ENCODE measurements at regions of chr15 and their contacts with region 1.

Region 1: DNA sequence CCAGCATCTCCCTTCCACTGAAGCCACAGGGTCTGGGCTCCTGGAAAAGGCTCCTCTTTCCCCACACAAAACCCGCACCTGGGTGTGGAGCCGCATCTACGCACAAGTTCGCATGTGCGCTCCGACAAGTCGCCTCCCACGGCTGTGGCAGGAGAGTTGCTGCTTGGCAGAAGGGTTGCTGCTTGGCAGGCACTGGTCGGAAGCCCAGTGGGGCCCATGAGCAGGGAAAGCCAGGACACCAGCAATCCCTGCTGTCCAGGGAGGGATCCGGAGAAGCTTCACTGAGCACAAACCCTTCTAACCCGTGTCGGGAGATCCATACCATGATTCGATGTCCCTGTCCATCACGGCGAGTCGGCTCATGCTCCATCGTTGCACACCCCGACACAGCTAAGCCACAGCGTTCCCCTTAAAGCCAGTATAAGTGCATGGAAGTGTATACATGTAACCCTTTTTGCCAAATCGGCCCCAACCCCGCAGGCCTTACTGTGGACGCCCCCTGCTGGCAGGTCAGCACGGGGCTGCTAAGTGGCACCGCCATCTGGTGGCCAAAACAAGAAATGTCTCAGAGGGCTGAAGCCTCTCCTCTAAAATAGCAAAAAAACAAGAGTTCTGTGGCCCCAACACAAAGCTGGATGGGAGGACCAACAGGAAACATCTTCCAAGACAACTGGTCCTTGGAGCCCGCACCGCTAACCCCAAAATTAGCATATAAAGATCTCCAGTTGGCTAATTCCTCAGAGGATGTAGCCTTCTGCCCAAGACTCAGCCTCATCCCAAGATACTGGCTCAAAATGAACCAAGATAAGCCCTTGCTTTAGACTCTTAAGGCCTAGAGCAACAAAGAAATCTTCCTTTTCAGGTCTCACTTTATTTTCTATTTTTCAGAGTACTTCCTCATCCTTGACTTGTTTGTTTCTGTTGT is 8.3 kb downstream of the ANKRD63 start:
- DNase-seq: peak; percentile 81 to 90 (median 83)
- H3K4me3 ChIP-seq: no peak overlapping the region
- H3K4me3 Mint-ChIP-seq: peak overlapping the region in 1 of 7 donors; percentile 22
- H3K27ac ChIP-seq: no peak overlapping the region
- H3K27ac Mint-ChIP-seq: no peak overlapping the region
- H3K4me1 ChIP-seq: peaks cover 5% of the 10 kb centered on the region
- H3K4me1 Mint-ChIP-seq: peaks cover 4 to 10% (median 5%) of the 10 kb centered on the region in 3 donors
- H3K27me3 ChIP-seq: peaks cover 16% of the 10 kb centered on the region
- H3K27me3 Mint-ChIP-seq: peaks cover 4 to 27% of the 10 kb centered on the region in 2 donors

Region 2: DNA sequence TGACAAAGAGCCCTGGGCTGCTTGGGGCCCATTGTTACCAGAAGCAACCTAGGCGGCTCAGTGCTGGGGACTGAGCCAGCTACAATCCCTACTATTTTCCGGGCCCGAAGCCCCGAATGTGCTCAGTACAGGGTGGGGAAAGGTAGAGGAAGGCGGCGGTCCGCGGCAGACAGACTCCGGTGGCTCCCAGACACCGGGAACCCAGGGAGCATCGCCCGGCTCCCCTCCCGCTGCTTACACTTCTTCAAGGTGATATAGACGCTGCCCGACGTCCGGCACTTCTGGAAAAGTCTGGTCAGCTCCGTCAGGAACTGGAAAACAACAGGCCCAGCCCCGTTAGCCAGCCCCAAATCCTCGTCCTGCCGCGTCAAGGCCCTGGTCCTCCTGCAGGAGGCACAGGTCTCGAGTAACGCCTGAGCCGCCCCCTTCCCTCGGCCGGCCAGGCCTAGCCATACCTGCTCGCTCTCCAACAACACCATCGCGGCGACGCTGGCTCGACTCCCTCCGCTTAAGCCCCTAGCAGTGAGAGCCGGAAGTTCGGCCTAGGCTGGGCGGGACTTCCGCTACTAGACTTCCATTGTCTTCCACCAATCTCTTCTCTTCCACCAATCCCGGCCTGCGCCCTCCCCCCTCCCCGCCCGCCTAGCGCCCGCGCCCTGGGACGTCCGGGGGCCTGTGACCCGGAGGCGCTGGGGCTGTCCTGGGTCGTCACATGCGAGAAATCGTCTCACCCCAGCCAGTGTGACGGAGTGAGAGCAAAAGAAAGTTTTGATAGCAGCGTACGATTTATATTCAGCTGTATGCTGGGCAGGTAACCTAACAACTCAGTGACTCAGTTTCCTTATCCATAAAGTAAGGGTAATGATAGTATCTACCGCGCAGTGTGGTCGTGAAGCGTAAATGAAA is 235.7 kb before region 1 on chr15 and contains the start of gene SRP14:
- CTCF ChIA-PET with region 1: interaction called, 97 read pairs
- POLR2A ChIA-PET with region 1: no interaction called
- DNase-seq: peak; percentile 89 to 95 (median 90)
- H3K4me3 ChIP-seq: peak within 1 kb of the TSS; percentile 82
- H3K4me3 Mint-ChIP-seq: peak within 1 kb of the TSS; percentile 98 to 100 (median 99)
- H3K27ac ChIP-seq: peak within 1 kb of the TSS; percentile 81
- H3K27ac Mint-ChIP-seq: peak within 1 kb of the TSS; percentile 92 to 100 (median 98)
- H3K4me1 ChIP-seq: peaks cover 20% of the 10 kb centered on the region
- H3K4me1 Mint-ChIP-seq: peaks cover 41 to 62% (median 60%) of the 10 kb centered on the region in 3 donors
- H3K27me3 ChIP-seq: no peaks in the 10 kb centered on the region
- H3K27me3 Mint-ChIP-seq: peaks cover 0 to 2% of the 10 kb centered on the region in 2 donors
- total RNA-seq, gene SRP14: 202 to 203 TPM

Region 3: DNA sequence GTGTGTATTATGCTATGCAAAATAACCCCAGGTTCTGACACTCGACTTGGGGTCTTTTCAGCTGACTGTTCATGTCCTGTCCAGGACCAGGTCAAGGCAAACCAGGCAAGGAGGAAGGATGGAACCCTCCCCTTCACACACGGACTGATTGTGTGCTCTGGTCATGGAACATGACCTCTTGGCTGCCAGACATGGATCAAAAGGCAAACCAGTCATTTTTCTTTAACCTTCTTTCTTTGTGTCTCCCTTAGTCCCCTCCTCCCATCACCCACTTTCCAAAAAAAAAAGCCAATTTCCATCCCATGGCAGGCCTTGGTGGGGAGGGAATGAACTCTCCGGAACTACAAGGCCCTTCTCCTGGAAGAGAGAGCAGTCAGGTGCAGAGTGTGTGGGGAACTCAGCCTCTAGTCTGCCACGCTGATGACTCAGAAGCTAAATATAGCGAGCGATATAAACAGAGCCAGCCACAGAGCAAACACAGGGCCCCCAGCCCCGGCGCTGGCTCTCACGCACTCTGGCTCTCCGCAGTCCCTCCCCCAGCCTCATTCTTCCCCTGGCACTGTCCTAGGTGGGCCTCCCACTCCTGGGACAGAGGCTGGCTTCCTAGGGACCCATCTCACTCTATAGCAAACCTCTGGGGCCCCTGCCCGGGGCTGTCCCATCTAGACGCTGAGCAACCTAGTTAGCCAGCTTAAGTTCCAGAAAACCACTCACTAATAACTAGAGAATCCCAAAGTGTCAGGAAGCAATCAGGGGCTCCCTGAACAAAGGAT is 175.9 kb before region 1 on chr15:
- CTCF ChIA-PET with region 1: interaction called, 10 read pairs
- POLR2A ChIA-PET with region 1: no interaction called
- DNase-seq: peak; percentile 13 to 87 (median 38)
- H3K4me3 ChIP-seq: peak overlapping the region; percentile 42
- H3K4me3 Mint-ChIP-seq: peak overlapping the region in 6 of 7 donors; percentile 51 to 82 (median 69)
- H3K27ac ChIP-seq: peak overlapping the region; percentile 43
- H3K27ac Mint-ChIP-seq: peak overlapping the region; percentile 56 to 94 (median 86)
- H3K4me1 ChIP-seq: peaks cover 45% of the 10 kb centered on the region
- H3K4me1 Mint-ChIP-seq: peaks cover 36 to 84% (median 41%) of the 10 kb centered on the region in 3 donors
- H3K27me3 ChIP-seq: no peaks in the 10 kb centered on the region
- H3K27me3 Mint-ChIP-seq: no peaks in the 10 kb centered on the region

Region 4: DNA sequence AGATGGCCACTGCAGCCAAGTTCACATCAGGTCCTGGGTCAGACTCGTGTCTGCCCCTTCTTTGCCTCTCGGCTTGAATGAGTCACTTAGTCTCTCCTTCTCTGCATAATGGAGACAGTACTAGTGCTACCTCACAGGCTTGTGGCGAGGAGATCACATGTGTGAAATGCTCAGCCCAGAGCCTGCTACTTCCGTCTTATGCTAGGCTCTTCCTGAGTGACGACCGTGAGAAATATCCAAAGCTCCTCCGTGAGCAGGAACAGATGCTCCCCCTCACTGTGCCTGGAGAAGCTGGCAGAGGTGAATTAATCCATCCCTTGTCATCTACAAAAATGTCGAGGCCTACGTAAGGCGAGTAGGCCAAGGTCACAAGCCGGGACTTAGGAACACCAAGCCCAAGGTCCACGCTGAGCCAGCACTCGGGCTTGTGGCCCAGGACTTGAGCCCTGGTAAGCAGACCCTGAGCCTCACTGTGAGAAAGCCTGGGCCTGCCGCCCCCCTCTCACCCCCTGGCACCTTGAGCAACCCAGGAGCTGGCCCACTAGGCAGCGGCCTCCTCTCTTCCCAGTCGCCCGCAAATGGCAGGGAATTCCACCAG is 17.9 kb before region 1 on chr15:
- CTCF ChIA-PET with region 1: interaction called, 38 read pairs
- POLR2A ChIA-PET with region 1: no interaction called
- DNase-seq: peak in 2 of 5 donors; percentile 13 to 15
- H3K4me3 ChIP-seq: no peak overlapping the region
- H3K4me3 Mint-ChIP-seq: peak overlapping the region in 4 of 7 donors; percentile 5 to 67 (median 18)
- H3K27ac ChIP-seq: no peak overlapping the region
- H3K27ac Mint-ChIP-seq: peak overlapping the region in 6 of 8 donors; percentile 51 to 89 (median 66)
- H3K4me1 ChIP-seq: peaks cover 7% of the 10 kb centered on the region
- H3K4me1 Mint-ChIP-seq: peaks cover 13 to 19% (median 18%) of the 10 kb centered on the region in 3 donors
- H3K27me3 ChIP-seq: peaks cover 7% of the 10 kb centered on the region
- H3K27me3 Mint-ChIP-seq: peaks cover 10 to 17% of the 10 kb centered on the region in 2 donors

Region 5: GRCh38 chr15:40323239-40323952 is 48.8 kb after region 1 on chr15 and contains the start of gene INAFM2:
- CTCF ChIA-PET with region 1: interaction called, 20 read pairs
- POLR2A ChIA-PET with region 1: interaction called, 4 read pairs
- DNase-seq: peak; percentile 86 to 94 (median 90)
- H3K4me3 ChIP-seq: peak within 1 kb of the TSS; percentile 40
- H3K4me3 Mint-ChIP-seq: peak within 1 kb of the TSS; percentile 64 to 89 (median 83)
- H3K27ac ChIP-seq: peak within 1 kb of the TSS; percentile 39
- H3K27ac Mint-ChIP-seq: peak within 1 kb of the TSS; percentile 14 to 96 (median 68)
- H3K4me1 ChIP-seq: peaks cover 23% of the 10 kb centered on the region
- H3K4me1 Mint-ChIP-seq: peaks cover 22 to 42% (median 29%) of the 10 kb centered on the region in 3 donors
- H3K27me3 ChIP-seq: no peaks in the 10 kb centered on the region
- H3K27me3 Mint-ChIP-seq: peaks cover 0 to 3% of the 10 kb centered on the region in 2 donors
- total RNA-seq, gene INAFM2: 13.5 to 15.3 TPM

Region 6: DNA sequence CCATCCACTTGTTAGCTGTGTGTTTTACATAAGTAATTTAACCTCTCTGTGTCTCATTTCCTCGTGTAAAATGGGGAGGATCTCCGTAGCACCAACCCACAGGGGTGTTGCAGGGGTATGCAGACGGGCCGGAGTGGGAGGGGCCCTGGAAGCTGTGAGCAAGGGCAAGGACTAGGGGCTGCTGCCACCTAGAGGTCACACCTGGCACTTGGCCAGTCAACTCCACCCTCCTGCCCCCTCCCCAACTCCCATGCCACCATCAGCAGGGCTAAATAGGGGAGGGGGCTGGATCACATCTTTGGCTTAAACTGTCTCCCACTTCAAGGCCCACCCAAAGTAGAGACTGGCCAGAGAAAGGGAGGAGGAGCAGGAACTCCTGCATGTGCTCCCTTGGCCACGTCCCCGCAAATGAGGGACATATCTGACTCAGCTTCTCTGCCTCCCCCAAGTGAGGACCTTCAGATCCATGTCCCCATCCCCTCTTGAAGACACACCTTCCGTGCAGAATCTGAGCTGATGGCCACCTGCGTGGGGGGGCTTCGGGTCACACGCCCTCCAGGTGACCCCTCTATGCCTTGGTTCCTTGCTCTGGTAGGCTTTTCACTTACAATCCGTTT is 63.5 kb after region 1 on chr15:
- CTCF ChIA-PET with region 1: interaction called, 268 read pairs
- POLR2A ChIA-PET with region 1: no interaction called
- DNase-seq: peak; percentile 59 to 83 (median 62)
- H3K4me3 ChIP-seq: no peak overlapping the region
- H3K4me3 Mint-ChIP-seq: no peak overlapping the region
- H3K27ac ChIP-seq: no peak overlapping the region
- H3K27ac Mint-ChIP-seq: peak overlapping the region in 2 of 8 donors; percentile 38 to 54
- H3K4me1 ChIP-seq: peaks cover 23% of the 10 kb centered on the region
- H3K4me1 Mint-ChIP-seq: peaks cover 4 to 12% (median 7%) of the 10 kb centered on the region in 3 donors
- H3K27me3 ChIP-seq: no peaks in the 10 kb centered on the region
- H3K27me3 Mint-ChIP-seq: peaks cover 2 to 4% of the 10 kb centered on the region in 2 donors

Region 7: GRCh38 chr15:40421246-40422157 is 146.9 kb after region 1 on chr15:
- CTCF ChIA-PET with region 1: interaction called, 27 read pairs
- POLR2A ChIA-PET with region 1: no interaction called
- DNase-seq: peak; percentile 66 to 83 (median 70)
- H3K4me3 ChIP-seq: no peak overlapping the region
- H3K4me3 Mint-ChIP-seq: peak overlapping the region in 2 of 7 donors; percentile 5 to 16
- H3K27ac ChIP-seq: no peak overlapping the region
- H3K27ac Mint-ChIP-seq: peak overlapping the region in 3 of 8 donors; percentile 29 to 68 (median 58)
- H3K4me1 ChIP-seq: peaks cover 4% of the 10 kb centered on the region
- H3K4me1 Mint-ChIP-seq: peaks cover 6 to 10% (median 6%) of the 10 kb centered on the region in 3 donors
- H3K27me3 ChIP-seq: no peaks in the 10 kb centered on the region
- H3K27me3 Mint-ChIP-seq: no peaks in the 10 kb centered on the region

Region 8: GRCh38 chr15:40506964-40507571 is 232.5 kb after region 1 on chr15:
- CTCF ChIA-PET with region 1: no interaction called
- POLR2A ChIA-PET with region 1: no interaction called
- DNase-seq: peak; percentile 42 to 76 (median 50)
- H3K4me3 ChIP-seq: no peak overlapping the region
- H3K4me3 Mint-ChIP-seq: peak overlapping the region in 2 of 7 donors; percentile 32 to 52
- H3K27ac ChIP-seq: no peak overlapping the region
- H3K27ac Mint-ChIP-seq: no peak overlapping the region
- H3K4me1 ChIP-seq: peaks cover 5% of the 10 kb centered on the region
- H3K4me1 Mint-ChIP-seq: peaks cover 9 to 27% (median 19%) of the 10 kb centered on the region in 3 donors
- H3K27me3 ChIP-seq: peaks cover 19% of the 10 kb centered on the region
- H3K27me3 Mint-ChIP-seq: peaks cover 49 to 73% of the 10 kb centered on the region in 2 donors